Adrenal gland (tissue), 19 donors: ENCODE measurements at regions of chr2 and their contacts with region 1.

Region 1: DNA sequence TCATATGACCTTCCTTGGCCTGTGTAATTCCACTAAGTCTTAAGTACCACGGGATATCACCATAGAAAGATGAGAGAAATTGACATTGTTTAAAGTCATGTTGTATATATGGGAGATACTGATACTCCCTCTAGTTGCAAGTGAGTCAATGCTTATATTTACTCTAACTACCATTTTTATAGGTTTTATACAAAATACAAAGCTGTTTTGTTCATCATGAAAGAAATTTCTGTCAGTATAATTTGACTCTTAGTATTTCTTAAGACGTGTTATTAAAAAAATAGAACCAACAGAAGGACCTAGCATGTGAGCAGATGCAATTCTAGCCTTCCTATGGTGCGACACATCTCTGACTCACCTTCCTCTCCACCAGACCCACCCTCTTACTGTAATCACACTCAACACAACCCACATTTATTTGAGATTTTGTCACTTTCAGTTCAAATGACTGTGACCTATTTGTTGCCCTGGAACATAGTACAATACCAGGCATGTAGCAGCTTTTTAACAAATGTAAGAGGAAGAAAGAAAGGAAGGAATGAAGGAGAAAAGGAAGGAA is 453.1 kb downstream of the CMPK2 start:
- DNase-seq: no peak
- H3K4me3 ChIP-seq: no peak overlapping the region
- H3K27ac ChIP-seq: no peak overlapping the region
- H3K4me1 ChIP-seq: no peaks in the 10 kb centered on the region
- H3K27me3 ChIP-seq: no peaks in the 10 kb centered on the region
- CTCF ChIP-seq: no peak
- POLR2A ChIP-seq: no peak

Region 2: GRCh38 chr2:6017736-6018286 is 394.8 kb before region 1 on chr2:
- intact Hi-C with region 1: loop called in 1 of 2 experiments (anchors 5 kb)
- DNase-seq: no peak
- H3K4me3 ChIP-seq: no peak overlapping the region
- H3K27ac ChIP-seq: no peak overlapping the region
- H3K4me1 ChIP-seq: no peaks in the 10 kb centered on the region
- H3K27me3 ChIP-seq: no peaks in the 10 kb centered on the region
- CTCF ChIP-seq: no peak
- POLR2A ChIP-seq: no peak

Region 3: DNA sequence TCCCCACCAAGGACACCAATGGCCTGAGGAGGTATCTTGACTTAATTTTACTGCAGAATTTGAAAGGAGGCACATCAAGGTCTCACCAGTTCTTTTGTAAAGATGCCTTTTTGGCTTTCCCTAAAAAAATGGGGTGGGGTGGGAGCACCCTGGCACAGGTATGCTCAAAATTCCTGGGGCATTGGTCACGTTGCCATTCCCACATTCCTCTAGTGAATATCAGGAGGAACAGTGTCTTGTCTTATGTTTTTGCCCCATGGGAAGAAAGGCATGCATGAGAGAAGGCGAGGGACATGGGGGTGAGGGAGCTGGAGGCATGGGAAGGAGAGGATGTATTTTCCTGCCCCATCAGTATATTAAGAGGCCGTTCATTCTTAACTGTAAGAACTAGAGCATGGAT is 177.8 kb after region 1 on chr2:
- intact Hi-C with region 1: no loop called
- DNase-seq: no peak
- H3K4me3 ChIP-seq: no peak overlapping the region
- H3K27ac ChIP-seq: no peak overlapping the region
- H3K4me1 ChIP-seq: no peaks in the 10 kb centered on the region
- H3K27me3 ChIP-seq: no peaks in the 10 kb centered on the region
- CTCF ChIP-seq: no peak
- POLR2A ChIP-seq: no peak